Gastrocnemius medialis (tissue), 4 donors: ENCODE measurements at regions of chr17 and their contacts with region 1.

Region 1: GRCh38 chr17:6666077-6666521 is 14.5 kb downstream of the C17orf100 start:
- DNase-seq: peak; percentile 40 to 53
- ATAC-seq: peak; percentile 88 to 94
- H3K4me3 ChIP-seq: no peak overlapping the region
- H3K27ac ChIP-seq: no peak overlapping the region
- H3K4me1 ChIP-seq: no peaks in the 10 kb centered on the region
- H3K27me3 ChIP-seq: peaks cover 0 to 9% (median 0%) of the 10 kb centered on the region in 3 donors
- CTCF ChIP-seq: peak; percentile 73 to 89 (median 80)
- POLR2A ChIP-seq: no peak

Region 2: DNA sequence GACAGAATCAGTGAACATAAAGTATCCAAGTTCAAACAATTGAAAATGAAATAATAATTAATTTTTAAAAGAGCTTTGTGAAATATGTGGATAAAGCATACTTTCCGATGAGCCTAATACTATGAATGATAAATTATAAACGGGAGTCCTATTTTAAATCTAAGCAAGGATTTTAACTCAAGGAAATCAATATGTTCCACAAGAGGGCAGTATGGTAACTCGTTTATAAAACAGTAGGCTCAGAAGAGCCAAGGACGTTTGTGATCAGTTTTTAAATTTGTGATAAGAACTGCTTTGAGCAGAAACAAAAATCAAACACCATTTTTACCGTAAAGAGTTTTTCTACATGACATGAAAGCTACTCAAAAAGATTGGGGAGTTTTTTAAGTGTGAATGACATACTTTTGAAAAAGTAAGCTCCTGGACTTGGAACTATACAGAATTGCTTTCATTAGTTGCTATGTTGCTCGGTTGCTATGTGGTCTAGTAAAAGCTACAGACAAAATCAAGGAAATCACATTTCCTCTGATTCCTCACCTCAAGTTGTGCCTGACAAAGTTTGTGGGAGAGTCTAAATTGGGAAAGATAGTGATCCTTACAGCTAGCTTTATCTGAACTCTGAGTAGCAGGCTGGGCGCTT is 177.3 kb after region 1 on chr17:
- in situ Hi-C with region 1: loop called in 3 of 4 experiments (anchors 5 to 25 kb)
- intact Hi-C with region 1: loop called (anchors 1 kb)
- DNase-seq: no peak
- ATAC-seq: no peak
- H3K4me3 ChIP-seq: no peak overlapping the region
- H3K27ac ChIP-seq: no peak overlapping the region
- H3K4me1 ChIP-seq: no peaks in the 10 kb centered on the region
- H3K27me3 ChIP-seq: peaks cover 10 to 19% (median 12%) of the 10 kb centered on the region in 3 donors
- CTCF ChIP-seq: peak; percentile 17 to 57 (median 36)
- POLR2A ChIP-seq: no peak

Region 3: DNA sequence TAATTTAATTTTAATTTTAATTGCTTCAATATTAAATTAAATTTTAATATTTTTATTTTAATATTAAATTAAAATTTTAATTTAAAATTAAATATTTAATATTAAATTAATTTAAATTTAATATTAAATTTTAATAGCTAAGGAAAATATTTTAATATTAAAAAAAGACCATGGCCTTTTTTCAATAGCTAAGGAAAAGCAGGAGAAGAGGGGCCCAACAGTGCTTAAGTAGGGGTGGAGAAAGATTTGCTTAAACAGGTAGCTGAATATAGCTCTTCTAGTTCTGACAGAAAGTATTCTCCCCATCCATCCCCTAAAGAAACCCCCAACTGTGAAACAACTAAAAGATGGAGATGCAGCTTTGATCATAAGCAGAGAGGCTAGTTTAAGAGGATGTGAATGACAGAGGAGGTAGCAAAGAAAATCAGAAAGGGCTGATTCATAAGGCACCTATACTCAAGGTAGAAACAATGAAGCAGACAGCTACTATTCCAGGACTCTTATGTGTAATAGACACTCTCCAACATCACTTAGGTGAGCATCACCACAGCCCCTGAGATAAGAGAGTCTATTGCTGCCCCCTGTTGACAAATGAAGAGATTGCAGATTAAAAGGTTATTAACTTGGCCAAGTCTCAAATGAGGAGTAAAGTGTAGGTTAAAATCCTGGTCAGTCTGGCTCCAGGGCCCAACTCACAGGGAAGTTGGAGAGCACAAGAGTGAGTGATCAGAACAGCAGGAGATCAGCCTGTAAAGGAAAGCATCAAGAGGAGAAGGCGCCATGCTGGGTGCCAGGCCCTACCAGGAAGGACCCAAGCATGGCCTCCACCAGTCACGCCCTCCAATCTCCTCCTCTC is 338.5 kb after region 1 on chr17:
- in situ Hi-C with region 1: loop called in 3 of 4 experiments (anchors 25 kb)
- intact Hi-C with region 1: loop called (anchors 5 kb)
- DNase-seq: no peak
- ATAC-seq: peak; percentile 39 to 80
- H3K4me3 ChIP-seq: no peak overlapping the region
- H3K27ac ChIP-seq: no peak overlapping the region
- H3K4me1 ChIP-seq: no peaks in the 10 kb centered on the region
- H3K27me3 ChIP-seq: no peaks in the 10 kb centered on the region
- CTCF ChIP-seq: peak; percentile 42 to 74 (median 65)
- POLR2A ChIP-seq: no peak